ENCODE measurements at regions of chr15 and their contacts with region 1.

Region 1: GRCh38 chr15:31128919-31129768 is 27.6 kb upstream of the TRPM1 start:
- DNase-seq: peak; percentile 60 to 65 (median 62)
- H3K4me3 ChIP-seq: no peak overlapping the region
- H3K4me3 Mint-ChIP-seq: no peak overlapping the region
- H3K27ac ChIP-seq: no peak overlapping the region
- H3K27ac Mint-ChIP-seq: no peak overlapping the region
- H3K4me1 ChIP-seq: peaks cover 4% of the 10 kb centered on the region
- H3K4me1 Mint-ChIP-seq: peaks cover 0 to 1% (median 0%) of the 10 kb centered on the region in 4 donors
- H3K27me3 ChIP-seq: no peaks in the 10 kb centered on the region
- H3K27me3 Mint-ChIP-seq: peaks cover 0 to 2% of the 10 kb centered on the region in 2 donors

Region 2: GRCh38 chr15:30859091-30859874 is 269.9 kb before region 1 on chr15:
- CTCF ChIA-PET with region 1: interaction called, 11 read pairs
- POLR2A ChIA-PET with region 1: no interaction called
- intact Hi-C with region 1: no loop called
- DNase-seq: peak in 3 of 5 donors; percentile 20 to 27 (median 26)
- H3K4me3 ChIP-seq: no peak overlapping the region
- H3K4me3 Mint-ChIP-seq: no peak overlapping the region
- H3K27ac ChIP-seq: no peak overlapping the region
- H3K27ac Mint-ChIP-seq: no peak overlapping the region
- H3K4me1 ChIP-seq: no peaks in the 10 kb centered on the region
- H3K4me1 Mint-ChIP-seq: peaks cover 0 to 9% (median 0%) of the 10 kb centered on the region in 4 donors
- H3K27me3 ChIP-seq: no peaks in the 10 kb centered on the region
- H3K27me3 Mint-ChIP-seq: no peaks in the 10 kb centered on the region

Region 3: DNA sequence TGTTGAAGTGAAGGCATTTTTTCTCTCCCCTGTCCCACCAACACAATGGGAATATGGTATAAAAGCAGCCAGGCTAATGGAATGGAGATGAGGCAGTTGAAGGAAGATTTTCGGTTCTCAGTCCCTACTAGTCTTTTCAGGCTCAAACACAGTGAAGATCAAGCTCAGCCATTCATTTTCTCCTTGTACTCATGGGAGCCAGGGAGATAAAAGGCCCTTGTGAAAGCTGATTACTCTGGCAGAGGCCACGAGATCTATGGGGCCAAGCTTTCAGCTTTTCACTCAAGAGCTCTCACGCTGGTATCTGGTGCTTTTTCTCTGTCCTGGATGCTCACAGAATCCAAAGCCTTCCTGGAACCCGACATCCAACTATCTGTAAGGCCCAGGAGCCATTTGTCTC is 239.9 kb before region 1 on chr15:
- CTCF ChIA-PET with region 1: interaction called, 4 read pairs
- POLR2A ChIA-PET with region 1: no interaction called
- intact Hi-C with region 1: loop called (anchors 1 kb)
- DNase-seq: no peak
- H3K4me3 ChIP-seq: no peak overlapping the region
- H3K4me3 Mint-ChIP-seq: no peak overlapping the region
- H3K27ac ChIP-seq: no peak overlapping the region
- H3K27ac Mint-ChIP-seq: no peak overlapping the region
- H3K4me1 ChIP-seq: no peaks in the 10 kb centered on the region
- H3K4me1 Mint-ChIP-seq: peaks cover 0 to 2% (median 0%) of the 10 kb centered on the region in 4 donors
- H3K27me3 ChIP-seq: no peaks in the 10 kb centered on the region
- H3K27me3 Mint-ChIP-seq: peaks cover 0 to 2% of the 10 kb centered on the region in 2 donors

Region 4: DNA sequence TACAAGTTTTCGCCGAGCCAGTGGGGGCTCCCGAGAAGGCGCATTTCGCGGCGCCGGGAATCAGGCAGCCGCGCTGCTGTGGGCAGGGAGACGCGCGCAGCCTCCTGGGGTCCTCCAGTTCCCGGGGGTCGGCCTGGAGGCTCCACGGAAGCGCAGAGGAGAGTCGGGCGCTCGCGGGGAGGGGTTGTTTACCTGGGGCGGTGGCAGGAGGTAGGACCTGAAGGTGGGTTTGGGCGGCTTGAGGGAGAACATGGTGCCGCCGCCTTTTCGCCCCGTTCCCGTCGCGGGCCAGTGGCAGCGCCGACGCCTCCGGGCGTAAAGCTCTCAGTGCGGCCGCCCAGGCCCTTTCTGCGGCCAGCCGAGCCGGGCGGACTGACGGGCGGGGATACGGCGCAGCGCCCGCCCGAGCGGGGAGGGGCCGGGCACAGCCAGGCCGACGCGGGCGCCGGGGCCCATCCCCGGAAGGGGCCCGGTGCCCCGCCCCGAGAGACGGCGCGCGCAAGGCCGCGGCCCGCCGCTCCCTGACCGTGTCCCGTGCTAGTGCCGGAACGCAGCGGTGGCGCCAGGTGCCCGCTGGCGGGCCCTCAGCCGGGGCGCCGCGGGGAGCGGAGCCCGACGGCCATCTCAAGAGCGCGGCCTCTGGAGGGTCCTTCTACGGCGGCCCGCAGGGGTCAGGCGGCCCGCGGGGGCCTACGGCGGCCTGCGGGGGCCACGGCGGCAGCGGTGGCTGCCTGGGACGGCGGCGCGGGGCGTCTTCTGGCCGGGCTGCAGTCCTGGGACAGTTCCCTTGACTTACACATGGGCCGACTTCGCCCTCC is 137.7 kb before region 1 on chr15 and contains the start of gene MTMR10:
- CTCF ChIA-PET with region 1: no interaction called
- POLR2A ChIA-PET with region 1: no interaction called
- intact Hi-C with region 1: loop called (anchors 10 kb)
- DNase-seq: peak; percentile 70 to 84 (median 82)
- H3K4me3 ChIP-seq: peak within 1 kb of the TSS; percentile 64 to 76
- H3K4me3 Mint-ChIP-seq: peak within 1 kb of the TSS; percentile 94 to 98 (median 96)
- H3K27ac ChIP-seq: peak within 1 kb of the TSS; percentile 76
- H3K27ac Mint-ChIP-seq: peak within 1 kb of the TSS; percentile 89 to 95 (median 94)
- H3K4me1 ChIP-seq: peaks cover 30% of the 10 kb centered on the region
- H3K4me1 Mint-ChIP-seq: peaks cover 19 to 32% (median 27%) of the 10 kb centered on the region in 4 donors
- H3K27me3 ChIP-seq: no peaks in the 10 kb centered on the region
- H3K27me3 Mint-ChIP-seq: no peaks in the 10 kb centered on the region
- total RNA-seq, gene MTMR10: 29.6 to 31.8 TPM

Region 5: GRCh38 chr15:31111091-31111647 is 18.0 kb before region 1 on chr15:
- CTCF ChIA-PET with region 1: interaction called, 12 read pairs
- POLR2A ChIA-PET with region 1: no interaction called
- intact Hi-C with region 1: no loop called
- DNase-seq: no peak
- H3K4me3 ChIP-seq: no peak overlapping the region
- H3K4me3 Mint-ChIP-seq: no peak overlapping the region
- H3K27ac ChIP-seq: no peak overlapping the region
- H3K27ac Mint-ChIP-seq: no peak overlapping the region
- H3K4me1 ChIP-seq: no peaks in the 10 kb centered on the region
- H3K4me1 Mint-ChIP-seq: no peaks in the 10 kb centered on the region
- H3K27me3 ChIP-seq: no peaks in the 10 kb centered on the region
- H3K27me3 Mint-ChIP-seq: peaks cover 6 to 12% of the 10 kb centered on the region in 2 donors

Measured in CD4-positive, alpha-beta memory T cell (primary cell).